Activated CD8-positive, alpha-beta T cell treated with anti-CD3 and anti-CD28 coated beads, Interleukin-2, amount 10 ng/mL, durations not matched to agents 7 days and 5 days (primary cell): ENCODE measurements at regions of chr1 and their contacts with region 1.

Region 1: DNA sequence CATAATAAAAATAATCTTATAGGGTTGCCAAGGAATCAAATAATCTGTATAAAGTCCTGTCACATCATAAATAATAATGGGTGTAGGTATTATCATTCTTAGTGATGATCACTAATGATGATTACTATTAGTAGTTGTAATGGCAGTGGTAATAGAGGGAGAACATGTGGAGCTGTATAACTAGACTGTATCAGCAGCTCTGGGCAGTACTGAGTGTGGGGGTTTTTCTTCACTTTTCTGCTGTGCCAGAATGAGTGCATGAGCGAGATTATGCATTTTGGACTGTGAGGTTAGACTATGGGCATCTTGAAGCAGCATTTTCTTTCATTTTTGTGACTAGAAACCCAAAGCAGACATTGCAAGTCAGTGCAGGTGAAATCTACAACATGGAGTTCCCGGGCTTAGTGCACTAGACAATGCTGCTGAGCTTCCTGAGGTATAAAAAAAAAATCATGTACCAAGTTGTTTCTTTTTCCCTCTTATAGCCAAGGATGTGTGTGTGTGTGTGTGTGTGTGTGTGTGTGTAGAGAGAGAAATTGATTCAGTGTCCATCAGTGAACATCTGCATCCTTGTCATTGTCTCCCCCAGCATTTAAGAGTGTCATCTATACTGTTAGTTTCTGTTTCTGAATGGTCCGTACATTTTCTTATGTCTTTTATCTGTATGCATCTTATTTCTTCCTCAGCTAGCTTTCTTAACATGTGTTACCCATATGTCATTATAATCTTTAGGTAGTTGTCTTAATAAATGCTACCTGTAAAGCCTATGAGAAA is 86.6 kb downstream of the GIPC2 start:
- DNase-seq: no peak
- ATAC-seq: no peak
- H3K4me3 Mint-ChIP-seq: no peak overlapping the region
- H3K27ac Mint-ChIP-seq: no peak overlapping the region
- H3K4me1 Mint-ChIP-seq: no peaks in the 10 kb centered on the region
- H3K27me3 Mint-ChIP-seq: no peaks in the 10 kb centered on the region

Region 2: DNA sequence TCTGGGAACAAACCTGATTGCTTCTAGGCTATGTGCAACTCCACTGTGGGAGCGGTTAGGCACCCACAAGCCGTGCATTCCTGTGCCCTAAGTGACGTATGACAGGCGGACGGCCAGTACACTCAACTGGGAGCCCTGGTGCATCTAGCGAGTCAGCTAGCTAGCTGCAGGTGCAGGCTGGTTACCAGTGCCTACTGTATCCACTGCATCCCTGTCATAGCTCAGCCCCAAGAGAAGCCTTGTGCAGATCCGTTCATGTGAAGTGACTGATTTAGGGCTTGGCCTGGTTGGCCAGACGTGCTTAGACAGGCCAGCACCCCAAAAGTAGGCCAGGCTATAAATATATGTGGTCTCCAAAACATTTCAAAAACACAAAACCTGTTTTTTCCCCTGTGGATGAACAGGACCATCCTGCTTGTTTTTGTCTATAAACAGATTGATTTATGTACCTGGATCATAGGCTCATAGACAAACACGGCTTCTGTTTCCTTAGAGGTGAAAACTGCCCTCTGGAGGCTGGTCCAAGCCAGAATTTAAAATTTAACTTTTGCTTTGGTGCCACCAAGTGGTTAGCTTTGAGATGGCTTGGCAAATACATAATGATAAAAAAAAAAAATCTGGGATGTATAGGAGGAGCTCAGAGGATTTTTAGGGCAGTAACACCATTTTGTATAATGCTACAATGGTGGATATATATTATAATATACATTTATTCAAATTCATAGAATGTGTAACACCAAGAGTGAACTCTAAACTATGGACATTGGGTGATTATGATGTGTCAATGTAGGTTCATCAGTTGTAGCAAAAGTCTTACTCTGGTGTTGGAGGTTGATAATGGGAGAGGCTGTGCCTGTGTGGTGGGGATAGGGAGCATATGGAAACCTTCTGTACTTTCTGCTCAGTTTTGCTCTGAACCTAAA is 18.1 kb before region 1 on chr1:
- CTCF ChIA-PET with region 1: interaction called, 10 read pairs
- POLR2A ChIA-PET with region 1: interaction called, 3 read pairs
- DNase-seq: peak; percentile 74
- ATAC-seq: peak; percentile 89
- H3K4me3 Mint-ChIP-seq: no peak overlapping the region
- H3K27ac Mint-ChIP-seq: no peak overlapping the region
- H3K4me1 Mint-ChIP-seq: peaks cover 2% of the 10 kb centered on the region
- H3K27me3 Mint-ChIP-seq: peaks cover 2% of the 10 kb centered on the region

Region 3: DNA sequence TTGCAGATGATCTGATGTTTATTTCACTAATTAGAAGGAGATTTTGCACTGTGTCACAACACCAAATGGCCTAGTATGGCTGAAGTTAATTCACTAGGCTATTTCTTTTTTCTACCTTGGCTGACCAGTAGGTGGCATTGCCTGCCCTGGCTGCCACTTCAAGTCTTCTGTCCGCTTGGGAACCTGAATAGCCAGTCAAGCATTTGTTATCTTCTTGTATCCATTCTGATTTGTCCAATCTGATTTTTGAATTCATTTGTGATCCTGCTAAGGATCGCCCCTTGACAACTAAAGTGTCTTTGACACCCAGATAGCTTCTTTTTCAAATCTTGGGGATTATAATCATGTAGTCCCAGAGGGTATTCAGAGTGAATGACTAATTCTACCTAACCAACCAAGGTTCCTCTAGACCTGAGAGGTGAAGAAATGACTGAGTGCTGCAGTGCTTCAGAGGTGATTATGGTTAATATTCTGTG is 12.8 kb after region 1 on chr1:
- CTCF ChIA-PET with region 1: interaction called, 37 read pairs
- POLR2A ChIA-PET with region 1: no interaction called
- DNase-seq: peak; percentile 53
- ATAC-seq: peak; percentile 38
- H3K4me3 Mint-ChIP-seq: no peak overlapping the region
- H3K27ac Mint-ChIP-seq: no peak overlapping the region
- H3K4me1 Mint-ChIP-seq: peaks cover 17% of the 10 kb centered on the region
- H3K27me3 Mint-ChIP-seq: peaks cover 15% of the 10 kb centered on the region

Region 4: GRCh38 chr1:78237364-78237916 is 105.1 kb after region 1 on chr1:
- CTCF ChIA-PET with region 1: no interaction called
- POLR2A ChIA-PET with region 1: no interaction called
- DNase-seq: no peak
- ATAC-seq: no peak
- H3K4me3 Mint-ChIP-seq: no peak overlapping the region
- H3K27ac Mint-ChIP-seq: no peak overlapping the region
- H3K4me1 Mint-ChIP-seq: no peaks in the 10 kb centered on the region
- H3K27me3 Mint-ChIP-seq: no peaks in the 10 kb centered on the region

Region 5: GRCh38 chr1:78607334-78607927 is 475.1 kb after region 1 on chr1:
- CTCF ChIA-PET with region 1: interaction called, 30 read pairs
- POLR2A ChIA-PET with region 1: no interaction called
- DNase-seq: no peak
- ATAC-seq: no peak
- H3K4me3 Mint-ChIP-seq: no peak overlapping the region
- H3K27ac Mint-ChIP-seq: no peak overlapping the region
- H3K4me1 Mint-ChIP-seq: no peaks in the 10 kb centered on the region
- H3K27me3 Mint-ChIP-seq: peaks cover 26% of the 10 kb centered on the region